Dendritic cell treated with granulocyte-macrophage colony-stimulating factor and Interleukin-4, amounts not matched to agents 40 ng/mL and 50 ng/mL, for 4 days (primary cell): ENCODE measurements at regions of chr2 and their contacts with region 1.

Region 1: DNA sequence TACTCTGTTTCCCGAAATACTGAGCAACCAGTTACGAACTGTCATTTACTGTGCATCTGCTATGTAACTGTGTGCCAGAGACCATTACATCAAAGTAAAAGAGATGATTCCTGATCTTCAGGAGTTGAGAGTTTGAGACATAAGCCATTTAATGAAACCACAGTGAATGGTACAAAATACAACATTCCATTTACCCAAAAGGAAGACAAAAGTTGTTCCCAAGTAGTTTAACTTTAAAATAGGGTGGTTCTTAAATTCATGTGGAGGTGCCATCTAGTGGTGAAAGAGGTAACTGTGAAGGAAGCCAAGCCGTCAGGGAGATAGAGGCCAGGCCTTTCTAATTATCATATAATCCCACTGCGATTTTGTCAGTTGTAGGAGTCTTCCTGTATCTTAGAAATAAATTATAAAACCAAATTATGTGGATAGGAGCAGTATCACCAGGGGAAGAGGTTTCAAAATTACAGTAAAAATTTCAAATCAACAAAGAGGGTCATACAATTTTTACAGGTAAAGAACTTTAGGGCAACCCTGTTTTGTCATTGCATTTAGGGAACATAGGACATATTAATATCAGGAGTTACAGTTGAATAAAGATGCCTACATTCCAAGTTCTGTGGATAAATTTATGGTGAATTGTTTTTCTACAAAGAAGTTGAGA is 67.7 kb downstream of the EPAS1 start:
- H3K4me3 Mint-ChIP-seq: no peak overlapping the region
- H3K27ac Mint-ChIP-seq: no peak overlapping the region
- H3K4me1 Mint-ChIP-seq: peaks cover 40% of the 10 kb centered on the region
- H3K27me3 Mint-ChIP-seq: no peaks in the 10 kb centered on the region

Region 2: DNA sequence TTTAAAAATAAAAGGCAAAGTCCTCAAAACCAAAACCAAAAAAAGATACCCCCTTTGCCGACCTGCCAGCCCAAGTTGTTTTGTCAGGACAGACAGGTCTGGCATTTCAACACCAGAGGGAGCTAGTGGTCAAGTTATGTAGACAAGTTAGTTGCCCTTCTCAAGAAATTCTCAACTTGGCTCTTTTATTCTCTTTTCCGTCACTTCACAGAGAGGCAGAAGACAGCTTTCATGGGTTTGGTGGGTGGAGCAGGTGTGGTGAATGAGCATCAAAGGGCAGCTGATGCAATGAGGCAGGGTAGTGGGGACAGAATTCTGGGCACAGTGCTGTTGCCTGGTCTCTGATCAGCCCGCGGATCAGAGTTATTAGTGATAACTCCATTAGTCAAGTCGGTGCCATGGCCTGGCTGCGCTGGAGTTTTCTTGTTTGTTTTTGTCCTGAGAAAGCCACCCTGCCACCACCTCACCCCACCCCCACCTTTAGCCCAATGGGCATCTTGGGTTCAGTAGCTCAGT is 371.4 kb before region 1 on chr2:
- intact Hi-C with region 1: loop called (anchors 5 kb)
- H3K4me3 Mint-ChIP-seq: no peak overlapping the region
- H3K27ac Mint-ChIP-seq: no peak overlapping the region
- H3K4me1 Mint-ChIP-seq: peaks cover 6% of the 10 kb centered on the region
- H3K27me3 Mint-ChIP-seq: no peaks in the 10 kb centered on the region

Region 3: GRCh38 chr2:46010925-46011490 is 353.9 kb before region 1 on chr2:
- intact Hi-C with region 1: loop called (anchors 1 kb)
- H3K4me3 Mint-ChIP-seq: no peak overlapping the region
- H3K27ac Mint-ChIP-seq: no peak overlapping the region
- H3K4me1 Mint-ChIP-seq: no peaks in the 10 kb centered on the region
- H3K27me3 Mint-ChIP-seq: no peaks in the 10 kb centered on the region

Region 4: DNA sequence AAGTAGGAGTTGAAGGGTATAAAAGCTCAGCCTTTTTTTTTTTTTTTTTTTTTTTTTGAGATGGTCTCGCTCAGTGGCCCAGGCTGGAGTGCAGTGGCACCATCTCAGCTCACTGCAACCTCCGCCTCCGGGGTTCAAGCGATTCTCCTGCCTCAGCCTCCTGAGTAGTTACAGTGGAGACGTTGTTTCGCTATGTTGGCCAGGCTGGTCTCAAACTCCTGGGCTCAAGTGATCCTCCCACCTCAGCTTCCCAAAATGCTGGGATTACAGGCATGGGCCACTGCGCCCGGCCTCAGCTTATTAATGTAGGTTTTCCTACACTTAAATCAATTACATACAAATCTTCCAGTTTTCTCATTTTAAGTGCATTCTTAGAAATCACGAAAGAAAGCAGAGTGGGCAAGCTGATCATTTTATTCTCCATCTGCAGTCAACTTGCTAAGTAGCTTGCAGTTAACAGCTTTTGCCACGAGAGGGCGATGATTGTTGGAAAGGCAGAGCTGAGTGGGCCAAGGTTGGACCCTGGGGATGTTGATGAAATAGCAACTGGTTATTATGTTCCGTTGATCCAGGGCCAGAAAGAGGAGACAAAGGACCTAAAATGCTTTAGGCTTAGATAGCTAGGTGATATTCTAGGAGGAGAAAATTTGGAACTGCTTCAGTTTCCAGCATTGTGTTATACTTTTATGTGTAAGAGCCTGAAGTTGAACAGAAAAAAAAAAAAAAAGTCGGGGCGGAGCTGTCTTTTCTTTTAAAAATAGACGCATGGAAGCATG is 302.1 kb before region 1 on chr2:
- intact Hi-C with region 1: loop called (anchors 1 kb)
- H3K4me3 Mint-ChIP-seq: no peak overlapping the region
- H3K27ac Mint-ChIP-seq: no peak overlapping the region
- H3K4me1 Mint-ChIP-seq: peaks cover 6% of the 10 kb centered on the region
- H3K27me3 Mint-ChIP-seq: no peaks in the 10 kb centered on the region

Region 5: GRCh38 chr2:46164581-46165301 is 200.2 kb before region 1 on chr2:
- intact Hi-C with region 1: loop called (anchors 10 kb)
- H3K4me3 Mint-ChIP-seq: no peak overlapping the region
- H3K27ac Mint-ChIP-seq: no peak overlapping the region
- H3K4me1 Mint-ChIP-seq: peaks cover 23% of the 10 kb centered on the region
- H3K27me3 Mint-ChIP-seq: peaks cover 2% of the 10 kb centered on the region

Region 6: GRCh38 chr2:46296840-46297545 is 67.9 kb before region 1 on chr2 and contains the start of gene EPAS1:
- intact Hi-C with region 1: loop called (anchors 5 kb)
- H3K4me3 Mint-ChIP-seq: peak within 1 kb of the TSS; percentile 90
- H3K27ac Mint-ChIP-seq: peak within 1 kb of the TSS; percentile 93
- H3K4me1 Mint-ChIP-seq: peaks cover 49% of the 10 kb centered on the region
- H3K27me3 Mint-ChIP-seq: peaks cover 50% of the 10 kb centered on the region

Region 7: DNA sequence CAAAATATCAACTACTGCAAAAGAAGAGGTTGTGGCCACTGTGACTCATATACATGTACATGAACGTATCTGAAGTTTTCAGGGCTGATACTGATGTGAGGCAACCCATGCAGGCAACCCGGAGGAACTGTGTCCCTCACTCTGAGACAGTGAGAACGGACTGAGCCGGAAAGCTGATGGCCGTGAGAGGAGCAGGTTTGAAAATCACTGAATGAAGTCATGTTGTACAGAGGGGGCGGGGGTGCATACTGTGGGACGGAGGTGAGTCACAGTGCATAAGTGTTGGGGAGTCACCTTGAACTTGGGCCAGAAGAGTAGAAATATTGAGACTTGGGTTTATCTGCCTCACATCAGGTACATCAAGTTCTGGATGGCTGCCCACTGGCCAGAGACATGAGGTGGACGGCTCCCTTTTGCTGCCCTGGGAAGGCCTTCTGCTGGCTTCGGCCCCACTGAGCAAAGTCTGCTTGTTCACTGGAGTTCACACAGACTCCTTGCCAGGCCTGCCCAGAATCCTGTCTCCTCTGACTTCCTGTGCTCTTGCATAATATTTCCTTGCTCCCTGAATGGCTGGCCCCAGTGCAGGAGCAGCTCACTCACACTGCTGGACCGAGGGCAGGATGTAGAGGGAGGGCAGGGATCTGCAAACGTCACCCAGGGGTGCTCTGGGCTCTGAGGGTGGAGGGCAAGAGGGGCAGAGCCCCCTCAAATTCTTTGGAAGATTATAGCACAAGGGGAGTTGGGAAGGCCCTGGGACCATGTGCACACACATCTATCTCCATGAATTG is 49.6 kb before region 1 on chr2:
- intact Hi-C with region 1: no loop called
- H3K4me3 Mint-ChIP-seq: no peak overlapping the region
- H3K27ac Mint-ChIP-seq: no peak overlapping the region
- H3K4me1 Mint-ChIP-seq: peaks cover 51% of the 10 kb centered on the region
- H3K27me3 Mint-ChIP-seq: peaks cover 3% of the 10 kb centered on the region

Region 8: GRCh38 chr2:46525522-46526155 is 160.7 kb after region 1 on chr2:
- intact Hi-C with region 1: no loop called
- H3K4me3 Mint-ChIP-seq: no peak overlapping the region
- H3K27ac Mint-ChIP-seq: peak overlapping the region; percentile 14
- H3K4me1 Mint-ChIP-seq: peaks cover 47% of the 10 kb centered on the region
- H3K27me3 Mint-ChIP-seq: no peaks in the 10 kb centered on the region

Region 9: GRCh38 chr2:46737577-46737976 is 372.6 kb after region 1 on chr2:
- intact Hi-C with region 1: no loop called
- H3K4me3 Mint-ChIP-seq: no peak overlapping the region
- H3K27ac Mint-ChIP-seq: no peak overlapping the region
- H3K4me1 Mint-ChIP-seq: no peaks in the 10 kb centered on the region
- H3K27me3 Mint-ChIP-seq: no peaks in the 10 kb centered on the region